Activated T-helper 2 cell treated with anti-CD3 and anti-CD28 coated beads, Interferon-gamma antibody, Interleukin-2, Interleukin-4, amounts not matched to agents 10 μg/mL and 5 μg/mL and 100 μg/mL, durations not matched to agents 14 hours and 24 hours and 36 hours (primary cell): ENCODE measurements at regions of chr19 and their contacts with region 1.

Region 1: GRCh38 chr19:3821857-3822364 is 35.7 kb upstream of the MATK start:
- DNase-seq: peak; percentile 85
- H3K4me3 Mint-ChIP-seq: no peak overlapping the region
- H3K27ac Mint-ChIP-seq: no peak overlapping the region
- H3K4me1 Mint-ChIP-seq: peaks cover 17% of the 10 kb centered on the region
- H3K27me3 Mint-ChIP-seq: no peaks in the 10 kb centered on the region

Region 2: DNA sequence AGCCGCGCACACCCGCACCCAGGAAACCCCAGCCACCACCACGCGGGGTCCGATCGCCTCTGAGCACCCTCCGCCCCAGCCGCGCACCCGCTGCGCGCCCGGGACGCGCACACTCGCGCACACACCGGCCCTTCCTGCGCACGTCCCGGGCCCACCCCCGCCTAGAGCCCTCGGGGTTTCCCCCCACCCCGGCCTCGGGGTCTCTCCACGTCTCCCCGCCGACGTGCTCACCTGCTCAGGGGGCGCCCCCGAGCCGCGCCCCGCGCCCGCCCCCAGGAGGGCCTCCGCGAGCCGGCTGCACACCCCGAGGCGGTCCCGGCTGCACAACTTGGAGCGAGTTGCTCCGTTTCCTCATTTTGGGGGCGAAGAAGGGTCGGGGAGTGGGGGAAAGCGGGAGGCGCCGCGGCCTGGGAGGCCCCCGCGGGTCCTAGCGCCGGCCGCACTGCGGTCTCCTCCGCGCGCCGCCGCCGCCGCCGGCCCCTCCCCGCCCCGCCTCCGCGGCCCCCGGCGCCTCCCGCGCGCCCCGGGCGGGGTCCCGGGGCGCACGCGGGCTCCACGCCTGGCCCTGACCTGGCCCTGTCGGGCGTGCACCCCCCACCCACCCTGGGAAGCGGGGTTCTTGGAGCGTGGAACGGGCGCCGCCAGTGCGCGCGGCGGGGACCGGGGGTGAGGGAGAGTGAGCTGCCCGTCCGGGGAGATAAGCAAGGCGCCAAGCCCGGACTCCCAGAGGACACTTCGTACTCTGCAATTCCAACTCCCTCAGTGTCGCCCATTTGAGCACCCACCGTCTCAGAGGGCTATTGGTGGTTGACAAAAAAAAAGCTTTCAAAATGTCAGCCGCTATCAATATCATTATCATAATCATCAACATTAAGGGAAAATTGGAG is 35.7 kb before region 1 on chr19 and contains the start of gene MATK:
- intact Hi-C with region 1: loop called (anchors 5 kb)
- DNase-seq: no peak
- H3K4me3 Mint-ChIP-seq: peak within 1 kb of the TSS; percentile 79
- H3K27ac Mint-ChIP-seq: no peak within 1 kb of the TSS
- H3K4me1 Mint-ChIP-seq: peaks cover 7% of the 10 kb centered on the region
- H3K27me3 Mint-ChIP-seq: peaks cover 4% of the 10 kb centered on the region
- total RNA-seq, gene MATK: 25.4 and 27.5 TPM in 2 replicates